A549 (cell line): ENCODE measurements at regions of chr9 and their contacts with region 1.

Region 1: GRCh38 chr9:128034821-128035764 is 32.0 kb downstream of the NAIF1 start:
- DNase-seq: peak; percentile 89 to 91
- ATAC-seq: peak; percentile 97 to 98
- H3K4me3 ChIP-seq: no peak overlapping the region
- H3K27ac ChIP-seq: peak overlapping the region; percentile 61 to 87
- H3K4me1 ChIP-seq: peaks cover 5% of the 10 kb centered on the region; the same call in 1 of the 3 replicates
- CTCF ChIP-seq: peak; percentile 87
- EP300 ChIP-seq: no peak
- POLR2A ChIP-seq: no peak
- RAD21 ChIP-seq: peak; percentile 97 to 99

Region 2: DNA sequence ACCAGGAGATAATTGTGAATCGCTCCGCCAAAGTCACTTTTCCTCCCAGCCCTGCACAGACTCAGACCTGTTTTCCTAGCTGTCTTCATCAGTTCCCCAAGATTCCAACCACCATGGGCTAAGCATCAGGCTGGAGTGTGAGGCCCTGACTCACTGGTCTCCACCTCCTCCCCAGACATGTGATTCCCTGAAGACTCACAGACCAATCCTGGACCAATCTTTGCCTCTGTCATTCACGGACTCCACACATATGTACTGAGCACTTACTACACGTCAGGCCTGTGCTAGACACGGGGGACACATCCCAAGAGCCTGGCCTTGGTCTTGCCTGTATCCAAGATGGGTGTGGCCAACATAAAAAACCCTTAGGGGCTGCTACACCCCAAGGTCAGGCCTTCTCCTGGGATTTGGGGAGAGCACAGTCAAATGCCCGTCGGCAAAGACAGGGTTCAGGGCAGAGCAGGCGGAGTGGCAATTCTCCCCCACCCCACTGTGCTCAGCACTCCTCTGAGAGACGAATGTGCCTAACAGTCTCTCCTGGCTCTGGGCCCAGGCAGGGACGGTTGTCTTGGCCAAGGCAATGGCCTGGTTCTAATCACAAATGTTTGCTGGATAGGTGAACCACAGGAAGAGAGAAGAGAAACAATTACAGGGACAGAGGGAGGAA is 66.2 kb before region 1 on chr9:
- CTCF ChIA-PET with region 1: interaction called, 827 read pairs
- POLR2A ChIA-PET with region 1: no interaction called
- DNase-seq: peak; percentile 67 to 75
- ATAC-seq: peak; percentile 52 to 66; a peak in 5 of 6 replicates
- H3K4me3 ChIP-seq: 0 out of 3 replicates have a peak overlapping the region, but pooled peaks have one; percentile 11
- H3K27ac ChIP-seq: peak overlapping the region; percentile 89 to 98
- H3K4me1 ChIP-seq: peaks cover 99% of the 10 kb centered on the region
- CTCF ChIP-seq: no peak
- EP300 ChIP-seq: no peak
- POLR2A ChIP-seq: no peak
- RAD21 ChIP-seq: no peak

Region 3: DNA sequence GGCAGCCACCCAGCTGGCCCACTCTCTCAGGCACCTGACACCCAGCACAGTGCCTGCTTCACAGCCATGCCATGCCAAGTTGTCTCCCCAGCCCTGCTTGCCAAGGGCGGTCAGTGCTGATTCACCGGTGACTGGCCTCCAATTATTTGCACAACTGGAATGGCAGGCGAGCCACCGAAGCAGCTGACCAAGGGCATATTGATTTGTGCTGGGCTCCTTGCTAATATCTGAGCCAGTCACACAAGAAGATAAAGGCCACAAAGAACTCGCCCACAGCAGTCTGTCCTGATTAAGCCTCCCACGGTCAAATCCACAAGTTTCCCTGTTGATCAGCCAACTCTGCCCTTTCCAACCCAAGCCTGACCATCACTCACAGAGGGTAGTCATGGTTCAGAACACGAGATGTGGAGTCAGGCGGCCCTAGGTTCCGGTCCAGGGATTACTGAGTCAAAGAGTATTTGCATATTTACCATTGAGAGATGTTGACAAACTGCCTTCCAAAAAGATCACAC is 47.9 kb before region 1 on chr9:
- CTCF ChIA-PET with region 1: interaction called, 157 read pairs
- POLR2A ChIA-PET with region 1: no interaction called
- DNase-seq: peak; percentile 81 to 88
- ATAC-seq: peak; percentile 87 to 92
- H3K4me3 ChIP-seq: no peak overlapping the region
- H3K27ac ChIP-seq: peak overlapping the region; percentile 83 to 86
- H3K4me1 ChIP-seq: peaks cover 45% of the 10 kb centered on the region
- CTCF ChIP-seq: no peak
- EP300 ChIP-seq: peak; percentile 37 to 51; a peak in 2 of 5 replicates
- POLR2A ChIP-seq: no peak
- RAD21 ChIP-seq: no peak

Region 4: DNA sequence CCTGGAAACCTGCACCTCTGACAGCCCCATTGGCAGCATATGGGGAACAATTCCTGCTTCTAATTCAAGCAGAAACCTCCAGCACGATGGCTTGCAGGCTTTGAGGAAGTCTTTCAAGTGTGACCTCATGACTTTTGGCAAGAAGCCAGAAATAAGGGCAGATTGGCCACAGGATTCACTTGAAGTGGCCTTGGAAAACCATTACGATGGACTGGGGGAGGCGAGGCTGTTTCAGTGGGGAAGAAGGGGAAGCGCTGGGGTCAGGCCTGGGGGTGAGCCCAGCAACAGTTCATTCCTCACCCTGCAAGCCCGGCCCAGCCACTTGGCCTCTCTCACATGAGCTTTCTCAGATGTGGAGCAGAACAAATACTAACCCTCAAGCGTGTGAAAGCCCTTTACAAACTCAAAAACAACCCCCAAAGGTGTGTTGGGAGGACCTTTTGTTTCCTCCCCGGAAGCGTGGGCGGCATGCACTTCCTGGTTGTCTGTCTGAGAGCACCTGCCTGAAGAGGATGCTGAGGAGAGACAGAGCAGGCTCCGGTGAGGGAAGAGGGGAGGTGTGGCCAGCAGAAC is 27.4 kb before region 1 on chr9:
- CTCF ChIA-PET with region 1: interaction called, 162 read pairs
- POLR2A ChIA-PET with region 1: no interaction called
- DNase-seq: peak in 1 of 2 experiments; percentile 89
- ATAC-seq: peak; percentile 19 to 39; a peak in 4 of 6 replicates
- H3K4me3 ChIP-seq: no peak overlapping the region
- H3K27ac ChIP-seq: peak overlapping the region; percentile 75 to 91
- H3K4me1 ChIP-seq: peaks cover 46% of the 10 kb centered on the region
- CTCF ChIP-seq: no peak
- EP300 ChIP-seq: no peak
- POLR2A ChIP-seq: no peak
- RAD21 ChIP-seq: 0 out of 5 replicates have a peak, but pooled peaks of 1 of the 2 experiments have one; percentile 8

Region 5: GRCh38 chr9:128067876-128068613 is 33.0 kb after region 1 on chr9 and contains the start of gene SLC25A25:
- CTCF ChIA-PET with region 1: interaction called, 29 read pairs
- POLR2A ChIA-PET with region 1: no interaction called
- DNase-seq: peak; percentile 96 to 99
- ATAC-seq: peak; percentile 80 to 86
- H3K4me3 ChIP-seq: peak within 1 kb of the TSS; percentile 84
- H3K27ac ChIP-seq: peak within 1 kb of the TSS; percentile 93 to 99
- H3K4me1 ChIP-seq: peaks cover 41% of the 10 kb centered on the region
- CTCF ChIP-seq: no peak
- EP300 ChIP-seq: no peak
- POLR2A ChIP-seq: peak; percentile 70
- RAD21 ChIP-seq: no peak; a peak in 1 of 5 replicates
- polyA plus RNA-seq, gene SLC25A25: 7.0 TPM in 2 replicates

Region 6: DNA sequence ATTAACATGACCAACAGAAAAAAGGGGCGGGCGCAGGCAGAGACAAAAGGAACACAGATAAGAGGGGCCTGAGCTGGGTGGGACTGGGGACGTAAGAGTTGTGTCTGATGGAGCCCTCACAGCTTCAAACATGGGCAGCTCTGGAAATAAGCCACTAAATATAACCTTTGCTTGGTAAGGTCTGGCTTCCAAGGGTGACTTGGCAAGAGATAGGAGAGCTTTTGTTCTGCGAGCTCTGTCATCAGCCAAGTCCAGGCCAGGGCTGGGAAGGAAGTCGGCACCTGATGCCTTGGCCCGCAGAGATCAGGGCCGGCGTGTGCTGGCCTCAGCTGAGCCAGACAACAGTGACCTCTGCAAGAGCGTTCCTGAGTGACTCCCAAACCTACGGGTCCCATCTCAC is 275.4 kb after region 1 on chr9:
- CTCF ChIA-PET with region 1: no interaction called
- POLR2A ChIA-PET with region 1: no interaction called
- DNase-seq: no peak
- ATAC-seq: no peak
- H3K4me3 ChIP-seq: no peak overlapping the region
- H3K27ac ChIP-seq: peak overlapping the region in 1 of 2 experiments; percentile 20; a peak in 2 of 6 replicates
- H3K4me1 ChIP-seq: peaks cover 30% of the 10 kb centered on the region
- CTCF ChIP-seq: no peak
- EP300 ChIP-seq: no peak
- POLR2A ChIP-seq: no peak
- RAD21 ChIP-seq: no peak